Panc1 (cell line): ENCODE measurements at regions of chr11 and their contacts with region 1.

Region 1: DNA sequence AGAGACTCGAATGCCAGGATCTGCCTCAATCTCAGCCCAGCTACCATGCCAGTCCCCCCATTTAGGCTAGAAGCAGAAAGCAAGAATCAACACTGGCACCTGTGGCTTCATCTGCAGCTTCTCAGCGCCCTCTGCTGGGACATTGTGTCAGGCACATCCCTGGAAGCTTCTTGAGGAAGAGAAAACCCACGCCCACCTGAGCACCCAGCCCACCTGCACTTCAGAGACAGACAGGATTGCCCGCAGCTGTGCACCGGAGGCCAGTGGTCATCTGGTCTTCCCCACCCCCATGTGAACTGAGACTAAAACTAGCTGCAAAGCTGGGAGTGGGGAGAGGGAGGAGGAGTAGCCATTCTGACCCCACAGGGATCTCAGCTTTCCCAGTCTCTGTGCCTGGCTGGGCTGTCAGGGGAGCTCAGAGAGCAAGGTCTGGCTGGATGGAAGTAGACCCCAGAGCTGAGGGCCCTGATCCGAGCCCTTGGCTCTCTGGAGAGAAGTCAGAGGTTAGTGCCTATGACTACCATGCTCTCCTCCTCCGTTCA is 66.8 kb downstream of the FEZ1 start:
- DNase-seq: no peak
- ATAC-seq: peak; percentile 56; the same call in 1 of the 2 replicates
- H3K4me3 ChIP-seq: no peak overlapping the region
- H3K27ac ChIP-seq: no peak overlapping the region
- H3K4me1 ChIP-seq: peaks cover 3% of the 10 kb centered on the region
- H3K27me3 ChIP-seq: peaks cover 25% of the 10 kb centered on the region
- CTCF ChIP-seq: peak; percentile 95

Region 2: DNA sequence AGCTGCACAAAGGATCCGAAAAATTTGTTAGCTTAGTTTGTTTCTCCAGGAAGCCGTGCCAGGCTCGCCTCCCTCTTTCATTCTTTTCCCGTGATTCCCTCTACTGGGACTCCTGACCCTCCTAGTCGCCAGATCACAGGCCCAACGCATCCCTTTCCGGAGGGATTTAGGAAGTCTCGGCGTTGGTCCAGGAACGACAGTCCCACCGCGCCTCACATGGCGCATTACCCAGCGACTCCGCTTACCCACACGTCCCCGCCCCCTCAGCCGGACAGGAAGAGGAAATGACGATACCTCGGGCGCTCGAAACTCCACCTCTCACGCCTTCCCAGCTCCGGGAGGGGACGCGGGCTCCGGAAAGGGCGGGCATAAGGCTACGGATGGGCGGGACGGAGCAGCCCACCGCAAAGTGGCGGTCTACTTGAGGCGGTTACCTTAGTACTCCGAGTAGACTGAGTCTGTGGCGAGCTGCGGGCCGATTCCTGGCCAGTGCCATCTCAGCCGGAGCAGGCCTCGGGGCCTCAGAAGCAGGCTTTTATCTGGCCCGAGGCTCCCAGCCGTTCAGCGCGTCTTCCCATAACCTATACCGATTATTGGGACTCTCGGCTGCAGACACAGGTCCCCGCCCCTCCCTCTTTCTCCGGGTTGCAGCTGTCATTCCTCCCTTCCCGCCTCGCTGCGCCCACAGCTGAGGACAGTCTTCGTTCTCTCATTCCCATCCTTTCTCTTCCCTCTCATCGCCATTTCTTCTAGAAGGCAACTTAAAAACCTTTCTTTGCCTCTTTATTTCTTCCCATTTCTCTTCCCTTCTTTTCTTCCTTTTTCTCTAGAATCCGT is 475.3 kb before region 1 on chr11 and contains the start of gene CCDC15:
- CTCF ChIA-PET with region 1: interaction called, 10 read pairs
- POLR2A ChIA-PET with region 1: no interaction called
- in situ Hi-C with region 1: no loop called
- intact Hi-C with region 1: no loop called
- DNase-seq: peak; percentile 85
- ATAC-seq: peak; percentile 100
- H3K4me3 ChIP-seq: peak within 1 kb of the TSS; percentile 77 to 87
- H3K27ac ChIP-seq: peak within 1 kb of the TSS; percentile 98
- H3K4me1 ChIP-seq: peaks cover 5% of the 10 kb centered on the region; the same call in 1 of the 2 replicates
- H3K27me3 ChIP-seq: peaks cover 16% of the 10 kb centered on the region
- CTCF ChIP-seq: no peak
- total RNA-seq, gene CCDC15: 2.8 TPM

Region 3: GRCh38 chr11:125239585-125240560 is 189.4 kb before region 1 on chr11:
- CTCF ChIA-PET with region 1: no interaction called
- POLR2A ChIA-PET with region 1: no interaction called
- in situ Hi-C with region 1: no loop called
- intact Hi-C with region 1: no loop called
- DNase-seq: no peak
- ATAC-seq: no peak
- H3K4me3 ChIP-seq: no peak overlapping the region
- H3K27ac ChIP-seq: no peak overlapping the region
- H3K4me1 ChIP-seq: no peaks in the 10 kb centered on the region
- H3K27me3 ChIP-seq: peaks cover 22% of the 10 kb centered on the region
- CTCF ChIP-seq: no peak

Region 4: DNA sequence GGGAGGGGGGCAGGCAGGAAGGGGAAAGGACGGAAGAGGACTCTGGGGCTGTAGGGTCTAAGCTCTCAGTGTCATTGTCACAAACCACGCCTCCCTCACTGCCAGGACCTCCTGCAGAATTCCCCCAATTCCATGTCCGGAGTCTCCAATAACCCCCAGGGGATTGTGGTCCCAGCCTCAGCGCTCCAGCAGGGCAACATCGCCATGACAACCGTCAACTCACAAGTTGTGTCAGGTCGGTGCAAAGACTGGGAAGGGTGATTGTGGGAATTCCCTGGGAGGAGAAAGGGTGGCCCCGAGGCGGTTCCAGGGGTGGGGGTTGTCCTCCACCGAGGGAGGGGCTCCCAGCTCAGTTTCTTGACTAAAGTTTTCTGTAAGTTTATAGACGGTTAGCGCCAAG is 19.1 kb before region 1 on chr11:
- CTCF ChIA-PET with region 1: interaction called, 11 read pairs
- POLR2A ChIA-PET with region 1: no interaction called
- in situ Hi-C with region 1: no loop called
- intact Hi-C with region 1: no loop called
- DNase-seq: no peak
- ATAC-seq: no peak
- H3K4me3 ChIP-seq: no peak overlapping the region
- H3K27ac ChIP-seq: no peak overlapping the region
- H3K4me1 ChIP-seq: no peaks in the 10 kb centered on the region
- H3K27me3 ChIP-seq: peaks cover 40% of the 10 kb centered on the region
- CTCF ChIP-seq: no peak

Region 5: DNA sequence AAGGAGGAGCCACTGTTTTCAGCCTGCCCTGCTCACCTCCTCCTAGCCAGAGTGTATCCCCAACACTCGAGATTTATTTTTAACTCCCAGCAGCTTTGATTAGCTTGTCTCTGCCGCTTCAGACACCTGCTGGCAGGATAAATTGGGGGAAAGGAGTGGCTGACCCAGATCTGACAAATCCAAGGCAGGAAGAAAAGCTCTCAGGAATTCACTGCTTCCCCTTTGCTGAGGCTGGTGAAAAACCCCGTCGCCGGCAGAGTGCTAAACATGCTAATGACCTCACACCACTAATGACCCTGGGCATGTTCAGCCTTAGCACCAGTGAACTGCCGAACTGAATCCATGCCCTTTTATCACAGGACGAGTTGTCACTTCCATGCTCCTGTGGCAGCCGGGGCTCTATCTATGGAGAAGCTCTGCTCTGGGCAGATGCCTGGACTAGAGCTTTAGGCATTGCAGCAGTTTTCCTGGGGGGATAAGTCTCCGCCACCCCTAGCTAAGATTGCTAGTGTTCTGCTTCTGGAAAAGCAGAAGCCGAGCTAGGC is 14.6 kb after region 1 on chr11:
- CTCF ChIA-PET with region 1: interaction called, 14 read pairs
- POLR2A ChIA-PET with region 1: no interaction called
- in situ Hi-C with region 1: no loop called
- intact Hi-C with region 1: no loop called
- DNase-seq: no peak
- ATAC-seq: no peak
- H3K4me3 ChIP-seq: no peak overlapping the region
- H3K27ac ChIP-seq: no peak overlapping the region
- H3K4me1 ChIP-seq: no peaks in the 10 kb centered on the region
- H3K27me3 ChIP-seq: peaks cover 15% of the 10 kb centered on the region
- CTCF ChIP-seq: no peak